ENCODE measurements at regions of chr20 and their contacts with region 1.

Region 1: DNA sequence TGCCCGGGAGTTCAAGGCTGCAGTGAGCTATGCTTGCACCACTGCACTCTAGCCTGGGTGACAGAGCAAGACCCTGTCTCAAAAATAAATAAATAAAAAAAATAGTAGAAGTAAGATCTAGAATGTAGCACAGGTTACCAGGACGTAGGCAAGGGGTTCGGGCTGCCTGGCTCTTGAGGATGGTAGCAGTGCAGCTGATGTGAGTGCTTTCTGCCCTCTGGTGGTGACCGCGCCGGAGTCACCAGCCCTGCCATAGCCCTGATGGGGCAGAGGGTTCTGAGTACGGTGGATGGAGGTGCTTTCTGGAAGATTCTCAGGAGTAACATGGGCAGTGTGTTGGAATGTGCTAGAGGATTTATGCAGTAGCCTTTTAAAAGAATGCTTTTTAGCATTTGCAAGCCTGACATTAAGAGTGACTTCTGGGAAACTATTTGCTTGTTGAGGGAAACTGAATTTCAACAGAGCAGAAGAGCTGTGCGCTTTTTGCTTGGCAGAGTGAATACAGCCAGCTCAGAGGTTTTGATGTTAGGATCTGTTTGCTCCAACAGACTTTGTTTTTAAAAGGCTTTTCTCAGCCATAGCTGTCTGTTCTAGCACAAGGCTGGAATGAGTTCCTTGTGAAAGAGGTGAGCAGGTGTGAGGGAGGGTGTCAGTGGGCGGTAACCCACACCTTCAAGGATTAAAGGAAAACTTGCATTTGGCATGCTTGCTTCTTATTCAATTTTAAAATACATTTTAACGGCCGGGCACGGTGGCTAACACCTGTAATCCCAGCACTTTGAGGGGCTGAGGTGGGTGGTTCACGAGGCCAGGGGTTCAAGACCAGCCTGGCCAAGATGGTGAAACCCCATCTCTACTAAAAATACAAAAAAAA is 65.9 kb downstream of the PTPN1 start:
- DNase-seq: no peak
- H3K4me3 ChIP-seq: no peak overlapping the region
- H3K27me3 ChIP-seq: no peaks in the 10 kb centered on the region
- CTCF ChIP-seq: peak; percentile 89

Region 2: DNA sequence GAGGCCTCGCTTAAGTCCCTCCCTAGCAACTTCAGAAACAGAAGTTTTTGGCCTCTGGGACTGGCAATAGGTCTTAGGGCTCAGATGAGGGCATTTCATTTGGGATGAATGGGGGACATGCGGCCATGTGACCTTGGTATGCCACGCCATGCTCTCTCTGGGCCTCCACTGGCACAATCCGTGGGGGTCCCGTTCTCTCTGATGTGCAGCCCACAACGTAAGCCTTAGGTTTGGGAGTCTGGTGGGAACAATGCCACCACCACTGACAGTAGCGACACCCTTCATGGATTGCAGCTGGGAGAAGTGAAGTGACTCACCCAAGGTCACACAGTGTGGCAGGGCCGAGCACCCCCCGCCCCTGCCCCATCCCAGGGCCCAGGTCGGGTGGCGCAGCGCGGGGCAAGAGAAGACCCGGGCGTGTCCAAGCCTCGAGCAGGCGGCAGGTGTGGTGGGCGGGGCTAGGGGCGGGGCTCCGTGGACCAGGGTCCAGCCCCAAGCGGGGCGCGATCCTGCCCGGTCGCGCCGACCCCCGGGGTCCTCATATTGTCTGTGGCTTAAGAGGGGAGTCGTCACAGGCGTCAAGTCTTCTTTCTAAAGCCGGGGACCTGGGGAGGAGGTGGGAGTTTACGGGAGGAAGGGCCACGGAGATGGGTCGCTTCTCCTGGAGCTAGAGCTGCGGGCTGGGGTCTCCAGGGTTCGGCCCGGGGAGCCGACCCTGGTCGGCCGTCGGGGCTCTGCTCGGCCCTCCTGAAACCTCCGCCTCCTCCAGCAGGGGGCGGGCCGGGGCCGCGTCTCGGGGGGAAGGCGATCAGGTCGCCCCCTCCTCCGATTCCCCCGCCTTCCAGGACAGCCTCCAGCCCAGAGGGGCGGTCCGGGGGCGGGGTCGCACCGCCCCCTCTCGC is 386.2 kb before region 1 on chr20:
- CTCF ChIA-PET with region 1: interaction called, 15 read pairs
- POLR2A ChIA-PET with region 1: no interaction called
- DNase-seq: no peak
- H3K4me3 ChIP-seq: peak overlapping the region; percentile 62
- H3K27me3 ChIP-seq: no peaks in the 10 kb centered on the region
- CTCF ChIP-seq: peak; percentile 82

Region 3: DNA sequence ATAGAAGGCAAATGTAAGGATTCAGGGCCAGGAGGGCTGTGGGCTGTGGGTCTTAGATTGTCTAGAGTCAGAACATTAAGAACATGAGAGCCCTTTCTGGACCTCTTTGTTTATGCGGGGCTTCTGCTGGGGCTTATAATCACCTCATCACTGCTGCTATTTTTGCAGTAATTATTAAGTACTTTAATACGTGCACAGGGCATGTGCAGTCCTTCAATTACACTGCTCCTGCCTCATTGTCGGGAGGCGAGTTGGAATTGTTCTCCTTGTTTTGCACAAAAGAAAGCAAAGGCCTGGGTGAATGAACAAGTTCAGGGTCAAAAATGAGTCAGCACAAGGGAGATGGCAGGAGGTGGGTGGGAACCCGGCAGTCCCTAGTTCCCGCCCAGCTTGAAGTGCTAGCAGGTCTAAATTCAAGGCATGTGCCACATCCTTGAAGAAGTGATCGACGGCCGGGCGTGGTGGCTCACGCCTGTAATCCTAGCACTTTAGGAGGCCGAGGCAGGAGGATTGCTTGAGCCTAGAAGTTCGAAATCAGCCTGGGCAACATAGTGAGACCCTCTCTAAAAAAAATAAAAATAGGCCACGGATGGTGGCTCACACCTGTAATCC is 100.3 kb before region 1 on chr20:
- CTCF ChIA-PET with region 1: interaction called, 12 read pairs
- POLR2A ChIA-PET with region 1: no interaction called
- DNase-seq: no peak
- H3K4me3 ChIP-seq: no peak overlapping the region
- H3K27me3 ChIP-seq: no peaks in the 10 kb centered on the region
- CTCF ChIP-seq: no peak

Region 4: GRCh38 chr20:50513169-50514033 is 62.7 kb before region 1 on chr20:
- CTCF ChIA-PET with region 1: interaction called, 10 read pairs
- POLR2A ChIA-PET with region 1: no interaction called
- DNase-seq: no peak
- H3K4me3 ChIP-seq: no peak overlapping the region; the same call in 1 of the 2 replicates
- H3K27me3 ChIP-seq: no peaks in the 10 kb centered on the region
- CTCF ChIP-seq: no peak

Region 5: DNA sequence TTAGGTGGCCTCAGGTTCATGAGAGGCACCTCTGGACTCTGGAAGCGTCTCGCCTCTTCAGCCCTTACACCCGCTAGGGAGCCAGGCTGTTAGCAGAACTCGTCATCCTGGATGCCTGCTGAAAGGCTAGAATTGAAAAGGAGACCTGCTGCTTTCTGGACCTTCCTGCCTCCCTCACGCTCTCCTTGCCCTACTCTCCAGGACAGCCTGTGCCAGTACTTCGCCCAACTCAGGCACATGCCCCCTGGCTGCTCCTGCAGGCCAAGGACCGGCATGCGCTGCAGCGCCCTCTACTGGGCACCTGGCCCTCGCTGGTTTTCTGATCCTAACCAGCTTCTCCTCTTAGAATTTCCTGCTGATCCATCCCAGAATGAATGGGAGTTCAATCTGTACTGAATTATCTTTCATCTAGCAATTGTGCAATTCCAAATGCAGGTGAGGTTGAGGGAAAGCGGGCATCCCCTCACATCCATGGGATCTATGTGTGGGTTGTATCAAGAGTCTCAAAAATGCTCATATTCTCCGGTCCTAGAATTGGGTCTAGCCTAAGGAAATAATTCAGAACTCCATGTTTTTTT is 12.0 kb after region 1 on chr20:
- CTCF ChIA-PET with region 1: interaction called, 40 read pairs
- POLR2A ChIA-PET with region 1: interaction called, 4 read pairs
- DNase-seq: no peak
- H3K4me3 ChIP-seq: no peak overlapping the region
- H3K27me3 ChIP-seq: no peaks in the 10 kb centered on the region
- CTCF ChIP-seq: peak; percentile 98

Measured in BJ (cell line).